B cell (primary cell): ENCODE measurements at regions of chr18 and their contacts with region 1.

Region 1: DNA sequence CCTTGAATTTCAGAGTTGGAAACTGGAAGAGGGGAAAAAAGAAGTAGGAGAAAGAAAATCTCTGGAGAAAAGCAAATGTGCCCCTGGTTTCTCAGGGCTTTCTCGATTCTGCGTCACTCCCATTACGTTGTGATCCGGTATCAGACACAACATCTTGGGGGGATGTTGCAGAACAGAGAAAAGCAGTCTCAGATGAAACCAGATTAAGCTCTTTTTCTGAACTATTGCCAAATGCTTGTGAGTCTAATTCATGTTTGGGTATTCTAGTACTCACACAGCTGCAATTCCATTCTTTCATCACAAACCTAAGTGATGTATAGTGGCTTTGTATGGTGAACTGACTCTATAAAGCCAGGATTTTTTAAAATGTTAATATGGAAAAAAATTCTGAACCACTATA is 233.2 kb downstream of the TCF4 start:
- DNase-seq: no peak
- ATAC-seq: no peak
- H3K4me3 ChIP-seq: no peak overlapping the region
- H3K4me3 Mint-ChIP-seq: no peak overlapping the region
- H3K27ac ChIP-seq: no peak overlapping the region
- H3K27ac Mint-ChIP-seq: no peak overlapping the region
- H3K4me1 ChIP-seq: peaks cover under 1 to 4% of the 10 kb centered on the region in 2 donors
- H3K4me1 Mint-ChIP-seq: peaks cover 15% of the 10 kb centered on the region
- H3K27me3 ChIP-seq: no peaks in the 10 kb centered on the region
- H3K27me3 Mint-ChIP-seq: peaks cover 3% of the 10 kb centered on the region
- CTCF ChIP-seq: no peak

Region 2: DNA sequence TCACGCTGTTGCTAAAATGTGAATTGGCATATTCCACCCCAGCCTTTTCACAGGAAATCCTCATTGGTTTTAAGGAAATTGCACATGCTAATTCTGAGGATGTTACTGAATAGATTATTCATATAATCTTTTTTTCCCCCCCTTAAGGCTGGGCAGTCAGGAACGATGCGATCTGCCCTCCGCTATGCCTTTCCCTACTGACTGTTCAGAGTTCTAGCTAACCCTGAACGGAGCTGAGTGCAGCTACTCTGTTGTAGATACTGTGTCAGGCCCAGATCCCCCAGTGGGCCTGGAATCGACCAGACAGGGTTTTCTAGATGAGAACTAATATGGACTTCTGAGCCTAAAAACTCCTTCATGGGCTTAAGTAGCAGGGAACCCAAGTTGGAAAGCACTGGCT is 41.0 kb after region 1 on chr18:
- CTCF ChIA-PET with region 1: no interaction called
- POLR2A ChIA-PET with region 1: no interaction called
- intact Hi-C with region 1: loop called (anchors 5 kb)
- DNase-seq: no peak
- ATAC-seq: no peak
- H3K4me3 ChIP-seq: no peak overlapping the region
- H3K4me3 Mint-ChIP-seq: no peak overlapping the region
- H3K27ac ChIP-seq: no peak overlapping the region
- H3K27ac Mint-ChIP-seq: no peak overlapping the region
- H3K4me1 ChIP-seq: no peaks in the 10 kb centered on the region
- H3K4me1 Mint-ChIP-seq: peaks cover 1% of the 10 kb centered on the region
- H3K27me3 ChIP-seq: no peaks in the 10 kb centered on the region
- H3K27me3 Mint-ChIP-seq: no peaks in the 10 kb centered on the region
- CTCF ChIP-seq: no peak

Region 3: DNA sequence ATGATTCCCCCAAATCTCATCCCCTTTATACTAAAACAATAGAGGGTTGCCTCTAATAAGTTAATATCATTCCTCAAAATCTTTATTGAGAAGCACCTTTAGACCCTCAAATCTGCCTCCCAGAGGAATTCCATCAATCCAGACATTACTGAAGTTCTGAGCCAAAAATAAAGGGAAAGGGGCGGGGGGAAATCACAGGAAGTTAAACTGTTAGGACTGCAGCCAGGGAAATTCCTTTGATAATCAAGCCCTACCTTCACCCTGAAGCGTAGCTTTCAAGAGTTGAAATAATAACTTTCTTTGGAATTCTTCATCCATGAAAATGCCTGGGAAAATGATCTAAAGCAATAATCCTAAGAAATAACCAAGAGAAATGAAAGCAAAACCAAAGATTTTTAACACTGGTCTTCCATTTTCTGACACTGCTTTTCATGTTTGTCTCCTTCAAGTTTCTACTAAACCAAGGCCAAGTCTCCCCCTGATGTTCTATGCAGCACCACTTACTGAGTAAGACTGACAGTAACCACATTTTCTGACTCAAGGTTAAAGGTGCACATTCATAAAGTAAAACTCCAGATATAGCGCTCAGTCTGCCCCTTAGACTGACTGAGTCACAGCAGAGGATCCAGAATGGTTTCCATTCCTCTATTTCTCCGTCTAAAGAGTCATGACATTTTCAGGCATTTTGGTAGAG is 155.0 kb after region 1 on chr18:
- CTCF ChIA-PET with region 1: no interaction called
- POLR2A ChIA-PET with region 1: no interaction called
- intact Hi-C with region 1: no loop called
- DNase-seq: peak; percentile 49
- ATAC-seq: peak; percentile 22
- H3K4me3 ChIP-seq: peak overlapping the region; percentile 0 to 60 (median 43)
- H3K4me3 Mint-ChIP-seq: peak overlapping the region; percentile 82
- H3K27ac ChIP-seq: peak overlapping the region; percentile 65 to 85
- H3K27ac Mint-ChIP-seq: peak overlapping the region; percentile 89
- H3K4me1 ChIP-seq: peaks cover 24 to 27% of the 10 kb centered on the region in 2 donors
- H3K4me1 Mint-ChIP-seq: peaks cover 51% of the 10 kb centered on the region
- H3K27me3 ChIP-seq: no peaks in the 10 kb centered on the region
- H3K27me3 Mint-ChIP-seq: no peaks in the 10 kb centered on the region
- CTCF ChIP-seq: no peak